ENCODE measurements at regions of chr22 and their contacts with region 1.

Region 1: GRCh38 chr22:19970479-19971275 is 29.1 kb upstream of the TXNRD2 start:
- DNase-seq: no peak
- H3K4me3 ChIP-seq: no peak overlapping the region
- H3K27ac ChIP-seq: peak overlapping the region; percentile 9 to 48 (median 36)
- H3K4me1 ChIP-seq: peaks cover 0 to 33% (median 24%) of the 10 kb centered on the region in 4 donors
- H3K27me3 ChIP-seq: no peaks in the 10 kb centered on the region
- CTCF ChIP-seq: peak in 2 of 3 experiments; percentile 88 to 96
- EP300 ChIP-seq: no peak
- POLR2A ChIP-seq: no peak

Region 2: DNA sequence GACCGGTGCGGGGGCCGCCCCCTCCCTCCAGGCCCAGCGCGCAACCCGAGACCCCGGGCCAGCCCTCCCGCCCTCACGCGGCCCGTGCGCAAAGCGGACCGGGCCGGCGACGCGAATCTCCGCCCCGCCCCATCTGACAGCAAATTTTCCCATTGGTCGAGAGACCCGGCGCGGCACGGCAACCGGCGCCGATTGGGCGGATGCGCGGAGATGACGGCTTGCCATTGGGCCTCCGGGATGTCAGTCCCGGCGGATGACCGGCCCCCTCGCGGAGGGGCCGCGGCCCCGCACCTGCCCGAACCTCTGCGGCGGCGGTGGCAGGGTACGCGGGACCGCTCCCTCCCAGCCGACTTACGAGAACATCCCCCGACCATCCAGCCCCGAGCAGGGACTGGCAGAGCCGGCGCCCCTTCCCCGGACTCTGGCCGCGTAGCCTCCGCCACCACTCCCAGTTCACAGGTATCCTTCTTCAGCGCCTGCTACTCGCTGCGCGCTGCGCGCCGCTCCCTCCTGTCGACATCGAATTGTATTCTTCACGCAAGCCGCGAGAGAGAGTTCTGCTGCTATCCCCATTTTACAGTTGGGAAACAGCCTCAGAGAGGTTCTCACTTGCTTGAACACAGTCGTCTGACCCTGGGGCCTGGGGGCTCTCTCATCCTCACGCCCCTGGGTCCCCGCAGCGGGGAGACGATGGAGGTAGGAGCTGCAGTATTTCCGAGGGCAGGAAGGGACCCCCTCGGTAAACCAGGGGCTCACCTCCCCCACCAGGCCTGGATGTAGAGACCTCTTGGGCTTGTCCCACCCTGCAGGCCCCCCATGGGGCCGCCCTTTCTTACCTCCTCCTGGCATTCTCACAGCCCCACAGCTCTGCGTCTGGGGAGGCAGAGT is 46.3 kb after region 1 on chr22 and contains the start of gene ARVCF:
- intact Hi-C with region 1: loop called (anchors 1 kb)
- DNase-seq: peak; percentile 96
- H3K4me3 ChIP-seq: peak within 1 kb of the TSS; percentile 75 to 88 (median 84)
- H3K27ac ChIP-seq: peak within 1 kb of the TSS; percentile 40 to 65 (median 58)
- H3K4me1 ChIP-seq: peaks cover 31 to 66% (median 46%) of the 10 kb centered on the region in 4 donors
- H3K27me3 ChIP-seq: no peaks in the 10 kb centered on the region
- CTCF ChIP-seq: peak; percentile 20 to 44 (median 41)
- EP300 ChIP-seq: no peak
- POLR2A ChIP-seq: no peak
- total RNA-seq, gene ARVCF: 31.1 to 55.8 (median 44.6) TPM

Region 3: DNA sequence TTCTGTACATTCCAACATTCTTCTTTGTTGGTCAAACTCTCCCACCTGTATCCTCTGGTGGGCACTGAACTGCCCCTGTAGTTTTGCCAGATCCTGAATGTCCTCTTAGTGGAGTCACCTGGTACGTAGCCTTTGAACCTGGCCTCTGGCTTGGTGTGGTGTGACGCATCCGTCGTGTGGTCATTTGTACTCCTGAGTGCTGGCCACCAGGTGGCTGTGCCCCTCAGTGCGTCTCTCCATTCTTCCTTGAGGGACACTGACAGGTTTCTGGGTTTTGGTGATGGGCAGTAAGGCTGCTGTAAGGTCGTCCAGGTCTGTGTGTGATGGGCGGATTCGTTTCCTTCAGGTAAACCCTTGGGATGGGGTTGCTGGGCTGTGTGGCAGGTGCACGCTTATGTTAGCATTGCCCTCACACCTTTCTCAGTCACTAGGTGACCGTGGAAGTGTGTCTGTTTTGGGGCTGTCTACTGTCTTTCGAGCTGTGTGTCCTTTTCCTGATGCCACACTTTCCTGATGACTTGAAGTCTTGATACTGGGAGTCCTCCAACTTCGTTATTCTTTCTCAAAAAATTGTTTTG is 131.6 kb after region 1 on chr22:
- intact Hi-C with region 1: loop called (anchors 10 kb)
- DNase-seq: no peak
- H3K4me3 ChIP-seq: no peak overlapping the region
- H3K27ac ChIP-seq: no peak overlapping the region
- H3K4me1 ChIP-seq: no peaks in the 10 kb centered on the region
- H3K27me3 ChIP-seq: no peaks in the 10 kb centered on the region
- CTCF ChIP-seq: no peak
- EP300 ChIP-seq: no peak
- POLR2A ChIP-seq: no peak